GM13976 (cell line): ENCODE measurements at regions of chr1 and their contacts with region 1.

Region 1: GRCh38 chr1:109532365-109533136 is 7.1 kb upstream of the GPR61 start:
- DNase-seq: peak; percentile 89
- CTCF ChIP-seq: peak; percentile 98

Region 2: DNA sequence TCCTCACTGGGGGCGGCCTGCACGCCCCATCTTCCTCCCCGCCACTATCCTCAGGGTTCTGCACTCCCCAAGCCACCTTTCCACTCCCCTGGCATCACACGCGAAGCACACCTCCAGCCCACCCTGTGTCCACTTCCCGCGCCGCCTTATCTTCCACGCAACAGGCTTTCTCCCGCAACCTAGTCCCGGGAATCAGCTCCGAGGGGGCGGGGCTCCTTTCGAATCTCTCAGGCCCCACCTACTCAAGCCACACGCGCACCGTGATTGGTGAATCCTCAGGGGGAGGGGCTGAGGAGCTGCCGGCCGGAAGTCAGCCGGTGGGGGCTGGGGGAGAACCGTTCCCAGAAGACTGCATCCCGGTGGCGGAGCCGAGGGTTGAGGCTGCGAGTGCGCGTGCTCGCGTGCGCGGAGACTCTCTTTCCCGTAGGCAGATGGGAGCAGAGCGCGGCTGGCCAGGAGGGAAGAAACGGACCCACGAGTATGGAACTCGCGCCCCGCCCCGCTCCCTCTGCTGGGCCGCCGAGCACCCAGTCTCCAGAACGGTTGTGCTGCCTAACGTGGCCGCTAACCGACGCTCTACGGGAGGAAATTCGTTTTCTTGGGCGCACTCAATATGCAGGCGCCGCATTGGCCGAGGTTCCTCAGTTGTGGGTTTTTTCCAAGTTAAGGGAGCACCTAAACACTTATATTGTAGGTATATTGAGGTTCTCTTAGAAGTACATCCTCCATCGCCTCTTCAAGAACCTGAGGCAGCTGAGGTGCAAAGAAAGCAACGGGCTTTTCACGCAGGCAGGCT is 249.4 kb before region 1 on chr1 and contains the start of gene PSRC1:
- in situ Hi-C with region 1: loop called (anchors 10 kb)
- DNase-seq: peak; percentile 98
- CTCF ChIP-seq: peak; percentile 11

Region 3: GRCh38 chr1:109499661-109500536 is 32.7 kb before region 1 on chr1:
- in situ Hi-C with region 1: loop called (anchors 5 kb)
- DNase-seq: no peak
- CTCF ChIP-seq: peak; percentile 28